Heart right ventricle (tissue), 16 donors: ENCODE measurements at regions of chr16 and their contacts with region 1.

Region 1: DNA sequence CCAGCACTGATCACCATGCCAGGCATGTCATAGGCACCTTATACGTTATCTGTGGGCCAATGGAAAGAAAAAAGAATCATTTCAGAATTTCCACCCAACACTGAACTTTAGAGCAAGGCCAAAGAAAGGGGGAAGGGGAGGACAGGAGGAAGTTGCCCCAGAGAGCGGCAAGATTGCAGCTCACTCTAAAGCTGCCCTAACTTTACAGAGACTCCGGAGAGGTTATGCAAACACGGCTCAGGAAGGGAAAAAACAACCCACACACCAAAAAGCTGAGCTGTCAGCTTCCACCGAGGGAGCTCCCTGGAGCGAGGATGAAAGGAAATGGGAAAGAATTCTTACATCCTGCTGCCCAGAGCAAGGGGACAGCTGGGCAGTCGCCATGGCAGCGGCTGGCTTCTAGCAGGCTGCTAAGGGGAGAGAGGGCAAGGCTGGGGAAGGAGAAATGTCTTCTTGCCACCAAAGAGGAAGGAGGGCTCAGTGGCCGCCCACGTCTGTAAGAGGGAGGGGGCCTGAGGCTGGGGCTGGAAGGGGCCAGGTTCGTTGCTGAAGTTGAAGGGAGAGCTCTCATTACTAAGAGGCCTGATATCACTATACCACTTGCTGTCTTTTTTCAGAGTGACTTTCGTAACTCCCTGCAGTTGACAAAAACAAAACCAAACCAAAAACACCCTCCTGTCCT is 18.2 kb downstream of the COTL1 start:
- DNase-seq: peak; percentile 43 to 60
- ATAC-seq: peak; percentile 53 to 71 (median 61)
- H3K4me3 ChIP-seq: peak overlapping the region in 6 of 10 donors; percentile 6 to 36 (median 26)
- H3K27ac ChIP-seq: peak overlapping the region in 8 of 10 donors; percentile 17 to 93 (median 60)
- H3K4me1 ChIP-seq: peaks cover 0 to 95% (median 17%) of the 10 kb centered on the region in 9 donors
- H3K27me3 ChIP-seq: peaks cover 0 to 4% (median 0%) of the 10 kb centered on the region in 7 donors
- CTCF ChIP-seq: no peak

Region 2: GRCh38 chr16:84537491-84538151 is 62.0 kb before region 1 on chr16:
- intact Hi-C with region 1: loop called in 1 of 10 experiments (anchors 5 kb)
- DNase-seq: no peak
- ATAC-seq: peak in 1 of 8 donors; percentile 21
- H3K4me3 ChIP-seq: no peak overlapping the region
- H3K27ac ChIP-seq: no peak overlapping the region
- H3K4me1 ChIP-seq: peaks cover 3 to 23% (median 10%) of the 10 kb centered on the region in 9 donors
- H3K27me3 ChIP-seq: no peaks in the 10 kb centered on the region
- CTCF ChIP-seq: no peak

Region 3: GRCh38 chr16:84643180-84643583 is 43.5 kb after region 1 on chr16:
- intact Hi-C with region 1: no loop called
- DNase-seq: peak; percentile 65 to 68
- ATAC-seq: peak; percentile 72 to 90 (median 84)
- H3K4me3 ChIP-seq: no peak overlapping the region
- H3K27ac ChIP-seq: peak overlapping the region in 9 of 10 donors; percentile 61 to 83 (median 71)
- H3K4me1 ChIP-seq: peaks cover 8 to 50% (median 40%) of the 10 kb centered on the region in 9 donors
- H3K27me3 ChIP-seq: no peaks in the 10 kb centered on the region
- CTCF ChIP-seq: no peak